Sciatic nerve (tissue), 2 donors: ENCODE measurements at regions of chr10 and their contacts with region 1.

Region 1: GRCh38 chr10:132387764-132388210 is 9.2 kb upstream of the PWWP2B start:
- DNase-seq: peak; percentile 88
- ATAC-seq: peak; percentile 72

Region 2: GRCh38 chr10:132163278-132163765 is 224.5 kb before region 1 on chr10:
- intact Hi-C with region 1: no loop called
- DNase-seq: no peak
- ATAC-seq: peak; percentile 34

Region 3: GRCh38 chr10:132452631-132453469 is 65.1 kb after region 1 on chr10:
- intact Hi-C with region 1: loop called (anchors 2 kb)
- DNase-seq: peak; percentile 93
- ATAC-seq: peak; percentile 82

Region 4: GRCh38 chr10:132643709-132644526 is 256.1 kb after region 1 on chr10:
- intact Hi-C with region 1: loop called (anchors 10 kb)
- DNase-seq: peak; percentile 42
- ATAC-seq: peak; percentile 28